Activated CD4-positive, alpha-beta memory T cell treated with anti-CD3 and anti-CD28 coated beads for 36 hours (primary cell): ENCODE measurements at regions of chr11 and their contacts with region 1.

Region 1: DNA sequence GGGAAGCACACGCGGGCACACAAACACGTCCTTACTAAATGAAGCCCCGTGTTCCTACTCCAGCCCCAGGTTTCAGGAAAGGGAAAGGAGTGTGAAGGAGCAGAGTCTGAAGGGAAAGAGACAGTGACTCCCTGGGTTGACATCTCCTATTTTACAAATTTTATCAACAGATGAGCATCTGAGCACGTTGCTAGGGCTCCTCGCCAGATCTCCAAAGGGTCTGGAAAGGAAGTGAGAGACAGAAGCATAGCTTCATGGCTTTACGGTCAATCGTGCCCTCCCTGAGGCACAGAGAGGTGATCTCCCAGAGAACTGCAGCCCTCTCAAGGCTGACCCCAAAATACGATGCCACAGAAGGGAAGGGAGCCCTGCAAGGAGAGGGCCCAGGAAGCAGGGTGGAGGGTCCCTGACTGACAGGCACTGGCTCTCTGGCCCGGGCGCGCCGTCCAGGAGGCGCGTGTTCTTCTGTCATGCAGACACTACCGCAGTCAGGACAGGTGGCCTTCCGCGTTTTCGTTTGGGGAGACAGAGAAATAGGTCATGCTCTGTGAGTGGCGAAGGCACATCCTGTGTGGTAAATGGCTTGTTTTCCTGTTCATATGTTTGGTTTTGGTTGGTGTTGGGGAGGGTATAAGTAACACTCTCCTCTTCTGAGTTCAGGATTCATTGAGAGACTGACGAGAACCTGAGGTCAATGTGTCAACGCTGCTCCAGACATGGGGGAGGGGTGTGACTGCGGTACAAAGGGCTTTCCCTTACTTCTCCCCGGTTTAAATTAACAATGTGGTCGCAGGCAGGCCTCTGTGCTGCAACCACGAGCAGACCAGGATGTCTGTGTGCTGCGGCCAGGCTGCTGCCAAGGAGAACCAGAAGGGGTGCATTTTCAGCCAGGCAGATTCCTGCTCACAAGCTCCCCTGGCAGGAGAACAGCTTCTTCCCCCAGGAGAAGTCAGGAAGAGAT is 813.3 kb downstream of the OPCML start:
- DNase-seq: peak; percentile 75
- H3K4me3 Mint-ChIP-seq: peak overlapping the region; percentile 40
- H3K27ac Mint-ChIP-seq: no peak overlapping the region
- H3K4me1 Mint-ChIP-seq: peaks cover 29% of the 10 kb centered on the region
- H3K27me3 Mint-ChIP-seq: no peaks in the 10 kb centered on the region

Region 2: GRCh38 chr11:132685174-132685611 is 33.8 kb before region 1 on chr11:
- CTCF ChIA-PET with region 1: no interaction called
- POLR2A ChIA-PET with region 1: no interaction called
- intact Hi-C with region 1: loop called (anchors 2 kb)
- DNase-seq: peak; percentile 34
- H3K4me3 Mint-ChIP-seq: no peak overlapping the region
- H3K27ac Mint-ChIP-seq: no peak overlapping the region
- H3K4me1 Mint-ChIP-seq: peaks cover 10% of the 10 kb centered on the region
- H3K27me3 Mint-ChIP-seq: no peaks in the 10 kb centered on the region

Region 3: DNA sequence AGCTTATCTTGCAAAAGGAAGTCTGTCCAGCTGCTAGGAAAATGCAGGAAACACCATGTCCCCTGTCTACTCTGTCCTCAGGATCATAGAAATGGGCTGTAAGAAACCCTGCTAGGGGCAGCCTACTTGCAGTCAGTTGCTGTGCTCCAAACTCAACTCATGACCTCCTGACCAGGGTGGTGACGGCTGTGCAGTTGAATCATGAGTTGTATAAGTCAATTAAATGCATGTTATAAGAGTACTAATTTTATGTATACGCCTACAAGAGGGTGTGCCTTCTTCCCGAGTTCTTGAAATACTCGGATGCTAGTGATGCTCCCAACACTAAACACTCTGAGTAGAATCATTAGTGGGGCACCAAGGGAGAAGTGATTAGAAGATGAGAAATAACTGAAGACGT is 36.9 kb after region 1 on chr11:
- CTCF ChIA-PET with region 1: no interaction called
- POLR2A ChIA-PET with region 1: no interaction called
- intact Hi-C with region 1: no loop called
- DNase-seq: no peak
- H3K4me3 Mint-ChIP-seq: no peak overlapping the region
- H3K27ac Mint-ChIP-seq: no peak overlapping the region
- H3K4me1 Mint-ChIP-seq: no peaks in the 10 kb centered on the region
- H3K27me3 Mint-ChIP-seq: no peaks in the 10 kb centered on the region

Region 4: DNA sequence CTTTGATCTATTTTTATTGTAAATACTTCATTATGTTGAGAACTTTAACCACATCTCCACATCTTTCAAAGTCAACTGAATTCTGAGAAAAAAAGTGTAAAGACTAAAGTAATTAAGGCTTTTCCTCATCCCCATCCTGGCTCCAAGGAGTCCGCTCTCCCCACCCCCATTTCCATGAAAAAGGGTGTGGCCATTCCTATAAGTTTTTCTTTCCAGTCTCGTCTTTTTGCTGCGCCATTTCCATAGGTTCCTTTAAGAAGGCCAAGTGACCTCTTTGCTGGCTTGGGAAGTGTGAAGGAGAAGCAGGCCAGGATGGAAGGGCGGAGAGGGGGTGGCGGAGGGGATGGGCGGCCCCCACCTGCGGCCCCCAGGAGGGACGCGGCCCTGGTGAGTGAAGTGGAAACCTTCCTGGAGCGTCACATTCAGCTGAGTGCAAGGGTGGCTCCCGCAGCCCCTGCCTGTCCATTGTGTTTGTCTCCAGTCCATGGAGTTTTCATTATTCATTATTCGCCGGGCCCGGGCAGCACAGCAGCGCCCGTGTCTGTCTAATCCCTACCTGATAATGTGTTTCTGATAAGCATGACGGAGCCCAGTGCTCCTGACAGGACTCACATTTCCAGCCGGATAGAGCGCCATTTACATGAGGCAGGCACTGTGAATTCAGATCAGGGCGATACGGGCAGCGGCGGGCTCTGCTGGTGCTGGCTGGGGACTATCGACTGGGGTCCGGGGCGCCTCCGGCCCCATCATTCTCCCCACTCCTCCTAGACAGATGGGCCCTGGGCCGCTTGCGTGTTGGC is 73.5 kb after region 1 on chr11:
- CTCF ChIA-PET with region 1: no interaction called
- POLR2A ChIA-PET with region 1: no interaction called
- intact Hi-C with region 1: no loop called
- DNase-seq: no peak
- H3K4me3 Mint-ChIP-seq: no peak overlapping the region
- H3K27ac Mint-ChIP-seq: no peak overlapping the region
- H3K4me1 Mint-ChIP-seq: no peaks in the 10 kb centered on the region
- H3K27me3 Mint-ChIP-seq: no peaks in the 10 kb centered on the region

Region 5: DNA sequence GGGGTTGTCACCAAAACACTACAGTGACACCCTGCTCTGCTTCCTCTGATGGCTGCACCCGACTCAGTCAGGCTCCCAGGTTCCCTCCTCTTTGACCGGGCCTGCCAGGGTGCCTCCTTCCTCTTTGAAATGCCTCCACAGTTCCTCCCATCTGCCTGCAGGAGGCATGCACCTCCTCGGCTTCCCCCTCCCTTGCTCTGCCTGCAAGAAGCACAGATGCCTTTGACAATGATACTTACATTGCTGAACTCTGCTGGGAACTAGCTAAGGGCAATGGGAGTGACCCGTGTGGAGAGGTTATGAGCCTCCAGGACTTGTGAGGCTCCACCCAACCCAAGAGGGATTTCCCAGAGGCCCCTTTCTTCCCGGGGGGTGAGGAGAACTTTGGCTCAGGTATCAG is 139.2 kb after region 1 on chr11:
- CTCF ChIA-PET with region 1: no interaction called
- POLR2A ChIA-PET with region 1: no interaction called
- intact Hi-C with region 1: no loop called
- DNase-seq: no peak
- H3K4me3 Mint-ChIP-seq: no peak overlapping the region
- H3K27ac Mint-ChIP-seq: no peak overlapping the region
- H3K4me1 Mint-ChIP-seq: no peaks in the 10 kb centered on the region
- H3K27me3 Mint-ChIP-seq: peaks cover 1% of the 10 kb centered on the region